ENCODE measurements at regions of chr5 and their contacts with region 1.

Region 1: DNA sequence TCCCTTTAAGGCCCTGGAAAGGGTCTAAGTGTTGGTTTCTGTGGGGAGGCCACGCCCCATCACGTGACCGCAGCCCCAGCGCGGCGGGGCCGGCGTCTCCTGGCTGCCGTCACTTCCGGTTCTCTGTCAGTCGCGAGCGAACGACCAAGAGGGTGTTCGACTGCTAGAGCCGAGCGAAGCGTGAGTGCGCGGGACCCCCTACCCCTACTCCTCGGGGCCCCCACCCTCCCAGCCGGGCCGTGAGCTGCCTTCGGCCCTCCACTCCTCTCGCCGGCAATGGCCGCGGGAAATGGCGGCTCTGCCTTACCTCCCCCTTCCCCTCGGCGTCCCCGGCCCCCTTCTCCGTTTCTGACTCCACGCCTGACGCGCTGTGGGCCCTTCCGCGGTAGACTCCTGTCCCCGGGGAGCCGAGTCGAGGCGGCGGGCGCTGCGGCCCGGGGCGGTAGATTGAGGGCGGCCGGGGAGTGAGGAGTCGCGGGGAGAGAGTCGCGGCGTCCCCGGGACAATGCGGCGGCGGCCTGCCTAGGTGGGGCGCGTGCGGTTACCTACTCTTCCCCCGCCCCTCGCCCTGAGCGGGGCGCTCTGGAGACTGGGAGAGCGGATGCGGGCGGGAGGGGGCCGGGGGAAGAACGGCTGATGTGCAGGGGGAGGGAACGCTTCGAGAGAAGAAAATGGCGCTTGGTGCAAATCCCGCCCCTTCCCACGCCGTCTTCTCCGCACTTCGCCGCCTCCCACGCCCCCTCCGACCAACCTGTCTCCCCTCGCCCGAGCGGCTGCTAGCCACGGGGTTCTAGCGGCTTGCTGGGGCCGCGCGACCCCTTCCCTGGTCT is at the start of gene SUB1:
- DNase-seq: peak; percentile 95
- H3K4me3 Mint-ChIP-seq: peak within 1 kb of the TSS; percentile 93
- H3K27ac Mint-ChIP-seq: peak within 1 kb of the TSS; percentile 98
- H3K4me1 Mint-ChIP-seq: peaks cover 72% of the 10 kb centered on the region
- H3K27me3 Mint-ChIP-seq: no peaks in the 10 kb centered on the region
- total RNA-seq, gene SUB1: 603 to 618 TPM

Region 2: GRCh38 chr5:32174011-32174870 is 411.4 kb before region 1 on chr5 and contains the start of gene GOLPH3:
- CTCF ChIA-PET with region 1: interaction called, 4 read pairs
- POLR2A ChIA-PET with region 1: interaction called, 26 read pairs
- DNase-seq: peak; percentile 95
- H3K4me3 Mint-ChIP-seq: peak within 1 kb of the TSS; percentile 99
- H3K27ac Mint-ChIP-seq: peak within 1 kb of the TSS; percentile 99
- H3K4me1 Mint-ChIP-seq: peaks cover 40% of the 10 kb centered on the region
- H3K27me3 Mint-ChIP-seq: peaks cover 2% of the 10 kb centered on the region
- total RNA-seq, gene GOLPH3: 81.6 to 86.8 TPM

Region 3: GRCh38 chr5:32444431-32445286 is 141.0 kb before region 1 on chr5 and contains the start of gene ZFR:
- CTCF ChIA-PET with region 1: interaction called, 7 read pairs
- POLR2A ChIA-PET with region 1: interaction called, 20 read pairs
- DNase-seq: peak; percentile 94
- H3K4me3 Mint-ChIP-seq: peak within 1 kb of the TSS; percentile 87
- H3K27ac Mint-ChIP-seq: peak within 1 kb of the TSS; percentile 90
- H3K4me1 Mint-ChIP-seq: peaks cover 30% of the 10 kb centered on the region
- H3K27me3 Mint-ChIP-seq: no peaks in the 10 kb centered on the region
- total RNA-seq, gene ZFR: 44.8 to 45.1 TPM

Region 4: DNA sequence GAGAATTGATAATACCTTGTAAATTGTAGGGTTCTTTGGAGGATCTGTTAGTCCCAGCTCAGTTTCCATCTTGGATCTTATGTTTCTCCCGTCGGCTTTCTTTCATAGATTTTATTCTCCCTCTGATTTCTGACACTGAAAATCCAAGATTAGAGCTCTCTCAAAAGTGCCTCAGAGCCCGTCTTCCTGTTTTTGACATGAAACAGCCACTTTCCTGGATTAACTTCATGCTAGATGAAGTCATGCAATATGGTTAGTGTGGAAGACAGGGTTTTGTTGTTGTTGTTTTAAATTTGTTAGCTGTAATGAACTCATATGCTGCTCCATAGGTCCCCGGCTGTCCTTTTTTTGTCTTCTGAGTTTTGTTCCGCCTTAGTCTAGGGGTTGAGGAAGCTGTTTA is 89.6 kb before region 1 on chr5:
- CTCF ChIA-PET with region 1: interaction called, 318 read pairs
- POLR2A ChIA-PET with region 1: interaction called, 43 read pairs
- DNase-seq: no peak
- H3K4me3 Mint-ChIP-seq: no peak overlapping the region
- H3K27ac Mint-ChIP-seq: no peak overlapping the region
- H3K4me1 Mint-ChIP-seq: peaks cover 11% of the 10 kb centered on the region
- H3K27me3 Mint-ChIP-seq: peaks cover 1% of the 10 kb centered on the region

Region 5: GRCh38 chr5:32522429-32523143 is 63.1 kb before region 1 on chr5:
- CTCF ChIA-PET with region 1: interaction called, 13 read pairs
- POLR2A ChIA-PET with region 1: interaction called, 17 read pairs
- DNase-seq: peak; percentile 71
- H3K4me3 Mint-ChIP-seq: no peak overlapping the region
- H3K27ac Mint-ChIP-seq: peak overlapping the region; percentile 12
- H3K4me1 Mint-ChIP-seq: peaks cover 19% of the 10 kb centered on the region
- H3K27me3 Mint-ChIP-seq: peaks cover 9% of the 10 kb centered on the region

Region 6: DNA sequence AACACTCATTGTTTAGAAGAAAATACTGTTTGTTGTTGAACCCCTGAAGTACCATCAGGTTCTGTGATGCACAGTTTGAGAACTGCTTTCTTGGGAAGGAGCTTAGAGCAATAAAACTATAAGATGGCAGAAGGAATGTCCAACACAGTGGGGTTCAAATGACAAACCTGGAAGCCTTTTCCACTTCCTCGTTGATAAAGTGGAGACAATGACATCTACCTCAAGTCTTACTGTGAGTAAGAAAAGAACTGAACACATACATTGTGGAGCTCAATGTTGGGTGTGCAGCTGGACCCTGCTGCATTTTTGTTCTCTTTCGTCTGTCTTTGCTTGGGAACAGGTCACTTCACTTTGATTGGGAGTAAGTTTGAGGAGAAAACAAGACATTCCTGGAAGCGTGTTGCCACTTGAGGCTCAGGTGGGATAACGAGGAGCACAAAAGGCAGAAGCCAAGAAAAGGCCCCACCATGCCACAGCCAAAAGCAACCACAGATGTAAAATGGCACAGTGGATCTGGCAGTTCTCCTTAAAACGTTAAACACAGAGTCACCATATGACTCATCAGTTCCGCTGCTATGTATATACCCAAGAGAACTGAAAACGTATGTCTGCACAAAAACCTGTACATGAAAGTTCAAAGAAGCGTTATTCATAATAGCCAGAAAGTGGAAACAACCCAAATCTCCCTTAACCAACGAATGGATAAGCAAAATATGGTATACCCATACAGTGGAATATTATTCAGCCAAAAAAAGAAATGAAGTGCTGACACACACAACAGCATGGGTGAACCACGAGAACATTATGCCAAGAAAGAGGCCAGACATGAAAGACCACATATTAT is 43.2 kb before region 1 on chr5:
- CTCF ChIA-PET with region 1: interaction called, 10 read pairs
- POLR2A ChIA-PET with region 1: interaction called, 210 read pairs
- DNase-seq: peak; percentile 68
- H3K4me3 Mint-ChIP-seq: peak overlapping the region; percentile 4
- H3K27ac Mint-ChIP-seq: peak overlapping the region; percentile 97
- H3K4me1 Mint-ChIP-seq: peaks cover 56% of the 10 kb centered on the region
- H3K27me3 Mint-ChIP-seq: no peaks in the 10 kb centered on the region

Region 7: GRCh38 chr5:32613050-32613672 is 27.5 kb after region 1 on chr5:
- CTCF ChIA-PET with region 1: interaction called, 23 read pairs
- POLR2A ChIA-PET with region 1: no interaction called
- DNase-seq: peak; percentile 86
- H3K4me3 Mint-ChIP-seq: no peak overlapping the region
- H3K27ac Mint-ChIP-seq: no peak overlapping the region
- H3K4me1 Mint-ChIP-seq: peaks cover 7% of the 10 kb centered on the region
- H3K27me3 Mint-ChIP-seq: no peaks in the 10 kb centered on the region

Region 8: DNA sequence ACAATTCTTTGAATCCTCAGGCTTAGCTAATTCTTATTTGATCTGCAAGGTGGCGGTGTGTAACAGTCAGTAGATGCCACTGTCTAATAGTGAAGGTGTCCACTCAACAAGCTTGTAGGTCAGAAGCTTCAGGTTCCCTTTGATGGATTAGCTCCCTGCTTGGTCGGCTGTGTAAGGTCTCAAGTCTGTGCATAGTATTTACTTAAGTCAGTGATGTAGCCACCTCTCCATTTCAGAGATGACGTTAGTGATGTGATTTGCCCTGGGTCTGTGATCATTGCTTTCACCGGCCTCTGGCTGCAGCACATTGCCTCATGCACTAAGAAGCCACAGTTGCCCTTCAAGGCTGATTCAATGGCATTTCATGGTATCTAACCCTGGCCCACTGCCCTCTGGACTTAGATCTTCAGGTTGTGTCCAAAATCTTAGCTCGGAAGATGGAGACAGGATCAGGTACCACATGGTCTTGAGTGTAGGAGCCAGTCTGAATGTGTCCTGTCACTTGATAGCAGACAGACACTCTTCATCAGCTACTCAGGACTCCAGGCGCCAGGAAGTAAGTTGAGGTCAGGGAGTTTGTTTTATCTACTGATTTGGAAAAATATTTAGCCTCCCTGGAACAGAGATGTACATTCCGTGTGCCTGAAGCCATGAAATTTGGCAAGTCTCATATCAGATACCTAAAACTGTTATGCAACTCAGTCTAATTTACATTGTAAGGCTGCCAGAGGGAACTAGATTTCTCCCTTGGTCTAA is 42.6 kb after region 1 on chr5:
- CTCF ChIA-PET with region 1: no interaction called
- POLR2A ChIA-PET with region 1: no interaction called
- DNase-seq: no peak
- H3K4me3 Mint-ChIP-seq: no peak overlapping the region
- H3K27ac Mint-ChIP-seq: no peak overlapping the region
- H3K4me1 Mint-ChIP-seq: no peaks in the 10 kb centered on the region
- H3K27me3 Mint-ChIP-seq: peaks cover 4% of the 10 kb centered on the region